ENCODE measurements at regions of chr11 and their contacts with region 1.

Region 1: GRCh38 chr11:83306200-83307080 is 20.3 kb upstream of the CCDC90B start:
- ATAC-seq: peak in 2 of 8 experiments; percentile 37 to 61
- H3K4me3 ChIP-seq: no peak overlapping the region
- H3K27ac ChIP-seq: no peak overlapping the region
- H3K4me1 ChIP-seq: peaks cover 0 to under 1% of the 10 kb centered on the region in 2 donors

Region 2: DNA sequence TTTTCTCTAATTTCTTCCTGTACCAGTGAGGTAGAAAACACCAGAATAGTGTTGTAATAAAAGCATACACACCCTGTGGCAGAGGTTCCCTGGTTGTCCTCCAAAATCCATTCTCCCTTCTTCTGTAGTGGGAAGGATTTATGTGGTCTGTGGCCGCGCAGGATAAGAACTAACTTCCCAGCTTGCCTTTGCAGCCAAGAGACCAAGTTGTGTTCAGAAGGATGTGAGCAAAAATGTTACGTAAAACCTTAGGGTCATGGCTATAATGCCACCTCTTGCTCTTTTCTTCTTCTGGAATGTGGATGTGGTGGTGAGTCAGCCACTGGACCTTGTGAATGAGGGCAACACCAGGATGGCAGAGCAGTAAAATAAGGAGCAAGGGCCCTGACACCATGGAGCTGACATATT is 48.7 kb before region 1 on chr11:
- in situ Hi-C with region 1: no loop called
- ATAC-seq: no peak
- H3K4me3 ChIP-seq: no peak overlapping the region
- H3K27ac ChIP-seq: no peak overlapping the region
- H3K4me1 ChIP-seq: peaks cover 0 to 4% of the 10 kb centered on the region in 2 donors

Region 3: GRCh38 chr11:83554876-83555275 is 248.4 kb after region 1 on chr11:
- in situ Hi-C with region 1: no loop called
- ATAC-seq: no peak
- H3K4me3 ChIP-seq: no peak overlapping the region
- H3K27ac ChIP-seq: no peak overlapping the region
- H3K4me1 ChIP-seq: no peaks in the 10 kb centered on the region

Region 4: GRCh38 chr11:83713701-83714100 is 407.3 kb after region 1 on chr11:
- in situ Hi-C with region 1: loop called in 2 of 9 experiments (anchors 10 to 25 kb)
- ATAC-seq: peak in 1 of 8 experiments; percentile 21
- H3K4me3 ChIP-seq: no peak overlapping the region
- H3K27ac ChIP-seq: no peak overlapping the region
- H3K4me1 ChIP-seq: no peaks in the 10 kb centered on the region

Region 5: DNA sequence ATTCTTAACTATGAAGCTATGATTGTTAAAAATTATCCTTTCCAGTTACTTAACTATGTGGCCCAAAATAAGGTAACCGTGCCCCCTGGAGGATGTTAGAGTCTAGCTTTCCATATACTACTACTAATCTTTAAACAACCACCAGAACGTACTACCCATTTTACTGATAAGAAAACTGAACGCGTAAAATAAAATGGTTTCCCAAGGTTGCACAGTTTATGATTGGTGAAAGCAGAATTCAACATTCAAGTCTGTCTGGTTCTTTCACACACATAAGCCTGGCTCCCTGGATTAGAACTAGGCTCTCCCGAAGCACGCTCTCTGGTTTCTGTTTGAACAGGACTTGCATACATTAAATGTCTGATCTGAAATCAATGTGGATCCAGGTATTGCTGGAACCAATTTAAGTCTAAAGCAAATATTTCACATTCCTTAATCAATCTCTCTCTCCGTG is 417.6 kb after region 1 on chr11:
- in situ Hi-C with region 1: loop called in 2 of 9 experiments (anchors 10 to 25 kb)
- ATAC-seq: peak; percentile 27 to 84 (median 48)
- H3K4me3 ChIP-seq: no peak overlapping the region
- H3K27ac ChIP-seq: no peak overlapping the region
- H3K4me1 ChIP-seq: peaks cover 16 to 21% of the 10 kb centered on the region in 2 donors

Measured in motor neuron (in vitro differentiated cells).